Thyroid gland (tissue), 4 donors: ENCODE measurements at regions of chr2 and their contacts with region 1.

Region 1: DNA sequence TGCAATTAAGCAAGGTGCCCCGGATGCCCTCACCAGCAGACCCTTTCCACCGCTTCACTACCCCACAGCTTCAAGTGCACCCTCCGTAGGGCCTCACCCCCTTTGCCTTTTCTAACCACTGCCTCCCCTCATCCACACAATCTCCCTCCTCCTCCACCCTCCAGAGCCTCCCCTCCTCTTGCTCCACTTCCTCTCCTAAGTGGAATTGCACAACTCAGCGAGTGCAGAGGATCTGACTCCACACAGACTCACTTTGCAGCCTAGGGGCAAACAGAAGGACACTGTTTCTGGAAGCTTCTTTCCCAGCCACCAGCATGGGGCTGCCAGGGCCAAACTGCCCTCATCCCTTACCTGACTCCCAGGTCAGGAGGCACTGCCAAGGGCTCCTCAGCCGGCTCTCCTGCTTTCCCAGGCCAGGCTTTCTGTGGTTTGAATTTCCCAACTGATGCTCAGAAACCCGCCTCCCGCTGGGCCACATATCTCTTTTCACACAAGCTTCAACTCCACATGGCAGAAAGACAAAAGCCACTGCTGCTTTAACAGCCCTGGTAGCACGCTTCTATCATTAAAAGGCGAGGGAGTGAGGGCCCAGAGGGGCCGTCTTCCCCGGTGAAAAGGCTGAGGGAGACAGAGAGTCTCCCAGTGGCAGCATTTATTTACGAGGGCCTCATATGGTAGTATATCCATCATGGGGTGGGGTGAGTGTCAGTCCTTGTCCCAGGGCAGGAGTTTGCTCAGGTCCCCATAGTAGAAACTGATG is 74.7 kb upstream of the MGAT4A start:
- DNase-seq: peak; percentile 66 to 69
- H3K4me3 ChIP-seq: no peak overlapping the region
- H3K27ac ChIP-seq: peak overlapping the region; percentile 73 to 93 (median 87)
- H3K4me1 ChIP-seq: peaks cover 20 to 34% of the 10 kb centered on the region in 2 donors
- H3K27me3 ChIP-seq: no peaks in the 10 kb centered on the region
- CTCF ChIP-seq: no peak
- POLR2A ChIP-seq: no peak

Region 2: GRCh38 chr2:98548920-98549818 is 256.4 kb before region 1 on chr2:
- intact Hi-C with region 1: no loop called
- DNase-seq: no peak
- H3K4me3 ChIP-seq: no peak overlapping the region
- H3K27ac ChIP-seq: no peak overlapping the region
- H3K4me1 ChIP-seq: no peaks in the 10 kb centered on the region
- H3K27me3 ChIP-seq: no peaks in the 10 kb centered on the region
- CTCF ChIP-seq: no peak
- POLR2A ChIP-seq: no peak

Region 3: DNA sequence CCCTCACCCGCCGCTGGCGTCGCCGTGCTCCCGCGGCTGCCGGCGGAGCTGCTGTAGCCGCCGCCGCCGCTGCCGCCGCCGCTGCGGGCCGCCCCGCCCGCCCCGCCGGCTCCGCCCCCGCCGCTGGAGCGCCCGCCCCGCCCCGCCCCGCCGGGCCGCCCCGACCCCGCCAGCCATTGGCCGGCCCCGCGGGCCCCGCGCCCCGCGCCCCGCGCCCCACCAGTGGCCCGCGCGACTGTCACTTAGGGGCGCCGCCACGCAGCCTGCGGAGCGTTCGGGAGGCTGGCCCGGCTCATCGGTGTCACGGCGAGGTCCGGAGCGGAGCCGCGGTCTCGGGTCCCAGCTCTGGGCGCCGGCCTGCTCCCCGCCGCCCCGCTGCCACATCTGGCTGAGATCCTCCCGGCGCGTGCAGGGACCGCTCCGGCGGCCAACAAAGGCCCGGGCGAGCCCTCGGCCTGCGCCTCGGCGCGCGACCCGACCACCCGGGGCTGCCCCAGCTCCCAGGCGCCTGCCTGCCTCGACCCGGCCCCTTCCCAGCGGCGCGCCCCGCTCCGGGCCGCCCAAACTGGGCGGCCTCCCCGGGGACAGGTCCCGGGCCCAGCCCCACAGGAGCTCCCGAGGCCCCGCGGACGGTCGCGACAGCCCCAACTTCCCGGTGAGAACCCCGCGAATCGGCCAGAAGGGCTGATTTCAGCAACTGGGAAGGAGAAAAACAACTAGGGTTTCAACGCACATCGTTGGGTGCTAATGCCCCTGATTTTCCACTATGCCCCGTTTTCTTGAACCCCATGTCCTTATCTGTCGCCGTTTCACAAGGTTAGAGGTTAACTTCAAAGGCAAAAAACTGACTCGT is 74.3 kb before region 1 on chr2 and contains the start of gene MGAT4A:
- intact Hi-C with region 1: loop called (anchors 10 kb)
- DNase-seq: peak; percentile 81 to 82
- H3K4me3 ChIP-seq: peak within 1 kb of the TSS; percentile 27 to 91 (median 83)
- H3K27ac ChIP-seq: peak within 1 kb of the TSS; percentile 68 to 83 (median 77)
- H3K4me1 ChIP-seq: peaks cover 15 to 27% of the 10 kb centered on the region in 2 donors
- H3K27me3 ChIP-seq: no peaks in the 10 kb centered on the region
- CTCF ChIP-seq: no peak
- POLR2A ChIP-seq: peak in 1 of 2 donors; percentile 86
- total RNA-seq, gene MGAT4A: 20.4 to 59.6 (median 39.8) TPM

Region 4: DNA sequence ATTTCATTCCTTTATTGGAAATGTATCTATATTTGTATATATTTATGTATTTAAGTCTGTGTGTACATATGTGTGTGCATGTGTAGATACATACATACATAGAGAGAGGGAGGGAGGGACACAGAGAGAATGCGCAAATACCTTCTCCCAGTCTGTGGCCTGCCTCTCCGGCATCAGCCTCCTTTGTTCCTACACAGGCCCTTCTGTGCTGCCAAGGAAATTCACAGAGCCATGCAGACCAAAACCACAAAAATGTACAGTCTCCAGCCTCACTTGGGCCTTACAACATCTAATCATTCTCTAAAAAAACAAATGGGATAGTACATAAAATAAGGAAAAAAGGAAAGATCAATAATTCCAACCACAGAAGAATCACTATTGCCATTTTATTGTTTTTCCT is 139.2 kb after region 1 on chr2:
- intact Hi-C with region 1: no loop called
- DNase-seq: no peak
- H3K4me3 ChIP-seq: no peak overlapping the region
- H3K27ac ChIP-seq: no peak overlapping the region
- H3K4me1 ChIP-seq: no peaks in the 10 kb centered on the region
- H3K27me3 ChIP-seq: no peaks in the 10 kb centered on the region
- CTCF ChIP-seq: no peak
- POLR2A ChIP-seq: no peak